IMR-90 (cell line): ENCODE measurements at regions of chr1 and their contacts with region 1.

Region 1: GRCh38 chr1:244599937-244600350 is 53.0 kb upstream of the DESI2 start:
- DNase-seq: peak; percentile 98
- ATAC-seq: peak; percentile 98
- H3K4me3 ChIP-seq: peak overlapping the region; percentile 60
- H3K27ac ChIP-seq: peak overlapping the region; percentile 73; the same call in 1 of the 2 replicates
- H3K4me1 ChIP-seq: peaks cover 5% of the 10 kb centered on the region
- H3K27me3 ChIP-seq: peaks cover 7% of the 10 kb centered on the region; the same call in 1 of the 2 replicates
- CTCF ChIP-seq: no peak
- POLR2A ChIP-seq: peak; percentile 81
- RAD21 ChIP-seq: no peak

Region 2: DNA sequence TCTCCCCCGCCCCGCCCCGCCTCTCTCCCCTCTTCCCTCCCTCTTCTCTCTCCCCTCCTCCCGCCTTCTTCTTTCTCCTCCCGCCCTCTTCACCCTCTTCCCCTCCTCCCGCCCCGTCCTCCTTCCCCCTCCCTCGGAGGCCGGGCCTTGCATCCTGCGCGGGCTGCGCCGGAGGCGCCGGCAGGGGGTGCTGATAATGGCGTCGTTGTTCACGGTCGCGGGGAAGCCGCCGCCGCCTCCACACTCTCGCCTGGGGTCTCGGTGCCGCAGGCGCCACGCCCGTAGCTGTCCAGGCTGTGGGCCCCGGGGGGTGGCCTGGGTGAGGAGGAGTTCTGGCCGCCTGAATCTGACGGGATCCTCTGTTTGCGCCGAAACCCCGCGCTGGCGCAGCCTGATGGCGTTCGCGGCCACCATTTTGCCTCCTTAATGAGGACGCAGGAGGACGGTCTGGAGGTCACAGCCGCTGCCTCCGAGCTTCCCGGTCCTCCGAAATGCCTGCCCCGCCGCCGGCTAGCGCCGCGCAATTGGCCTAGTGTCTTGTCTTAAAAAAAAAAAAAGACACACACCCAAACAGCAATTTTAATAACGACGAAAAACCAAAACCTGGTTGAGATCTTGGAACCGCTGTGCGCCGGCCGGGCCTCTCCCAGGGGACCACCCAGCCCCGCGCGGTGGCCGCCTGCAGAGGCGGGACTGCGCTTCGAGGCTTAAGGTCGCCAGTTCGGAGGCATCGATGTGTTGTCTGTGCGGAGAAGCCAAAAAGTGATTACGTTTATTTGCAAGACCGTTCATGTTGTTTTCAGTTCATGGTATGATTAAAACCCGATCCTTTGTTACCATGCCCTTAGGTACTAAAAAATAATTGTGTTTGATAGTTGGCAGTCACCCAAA is 371.0 kb after region 1 on chr1:
- CTCF ChIA-PET with region 1: no interaction called
- POLR2A ChIA-PET with region 1: no interaction called
- dilution Hi-C with region 1: no loop called
- in situ Hi-C with region 1: no loop called
- intact Hi-C with region 1: loop called (anchors 2 kb)
- DNase-seq: peak; percentile 95
- ATAC-seq: peak; percentile 89
- H3K4me3 ChIP-seq: peak overlapping the region; percentile 63
- H3K27ac ChIP-seq: peak overlapping the region; percentile 98
- H3K4me1 ChIP-seq: peaks cover 7% of the 10 kb centered on the region
- H3K27me3 ChIP-seq: no peaks in the 10 kb centered on the region
- CTCF ChIP-seq: peak; percentile 65
- POLR2A ChIP-seq: peak; percentile 75
- RAD21 ChIP-seq: peak; percentile 43; the same call in 1 of the 2 replicates